Sciatic nerve (tissue), 2 donors: ENCODE measurements at regions of chr17 and their contacts with region 1.

Region 1: GRCh38 chr17:79789534-79790353 is 7.1 kb downstream of the CBX8 start:
- DNase-seq: no peak
- ATAC-seq: peak; percentile 50

Region 2: GRCh38 chr17:79839363-79840268 is 49.9 kb after region 1 on chr17 and contains the start of gene CBX4:
- intact Hi-C with region 1: loop called (anchors 5 kb)
- DNase-seq: peak; percentile 97
- ATAC-seq: peak; percentile 84
- total RNA-seq, gene CBX4: 16.8 TPM

Region 3: DNA sequence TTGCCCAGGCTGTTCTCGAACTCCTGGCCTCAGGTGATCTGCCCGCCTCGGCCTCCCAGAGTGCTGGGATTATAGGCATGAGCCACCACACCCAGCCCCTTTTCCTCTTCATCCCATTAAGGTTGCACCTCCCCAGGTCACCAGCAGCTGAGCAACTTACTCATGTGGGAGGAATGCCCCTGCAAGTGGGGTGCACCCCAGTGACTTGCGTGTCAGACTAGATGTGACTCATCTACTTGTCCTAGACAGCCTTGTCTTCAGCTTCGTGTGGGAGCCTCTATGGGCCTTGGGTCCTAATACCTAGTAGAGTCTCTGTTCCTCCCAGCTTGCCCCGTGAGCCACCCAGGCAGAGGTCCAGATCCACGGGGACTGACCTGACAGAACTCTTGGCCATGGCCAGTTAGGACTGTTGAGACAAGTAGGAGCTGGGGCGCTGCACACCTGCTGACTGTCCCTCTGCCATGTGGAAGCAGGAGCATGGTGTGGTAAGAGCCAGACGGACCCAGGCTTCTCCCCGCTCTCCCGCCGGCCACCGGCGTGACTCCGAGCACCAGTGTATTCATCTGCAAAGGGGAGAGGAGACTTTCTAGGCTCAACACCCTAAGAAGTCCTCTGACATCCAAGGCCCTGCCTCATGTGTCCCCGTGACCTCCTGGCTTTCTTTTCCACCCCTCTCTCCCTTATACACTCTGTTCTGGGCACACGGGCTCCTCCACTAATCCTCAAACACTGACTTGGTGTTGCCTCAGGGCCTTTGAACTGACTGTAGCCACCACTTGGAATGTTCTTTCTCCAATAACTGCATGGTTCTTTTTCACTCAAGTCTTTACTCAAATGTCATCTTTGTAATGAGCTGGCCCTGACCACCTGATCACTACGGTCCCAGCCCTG is 61.1 kb after region 1 on chr17:
- intact Hi-C with region 1: no loop called
- DNase-seq: no peak
- ATAC-seq: no peak

Region 4: DNA sequence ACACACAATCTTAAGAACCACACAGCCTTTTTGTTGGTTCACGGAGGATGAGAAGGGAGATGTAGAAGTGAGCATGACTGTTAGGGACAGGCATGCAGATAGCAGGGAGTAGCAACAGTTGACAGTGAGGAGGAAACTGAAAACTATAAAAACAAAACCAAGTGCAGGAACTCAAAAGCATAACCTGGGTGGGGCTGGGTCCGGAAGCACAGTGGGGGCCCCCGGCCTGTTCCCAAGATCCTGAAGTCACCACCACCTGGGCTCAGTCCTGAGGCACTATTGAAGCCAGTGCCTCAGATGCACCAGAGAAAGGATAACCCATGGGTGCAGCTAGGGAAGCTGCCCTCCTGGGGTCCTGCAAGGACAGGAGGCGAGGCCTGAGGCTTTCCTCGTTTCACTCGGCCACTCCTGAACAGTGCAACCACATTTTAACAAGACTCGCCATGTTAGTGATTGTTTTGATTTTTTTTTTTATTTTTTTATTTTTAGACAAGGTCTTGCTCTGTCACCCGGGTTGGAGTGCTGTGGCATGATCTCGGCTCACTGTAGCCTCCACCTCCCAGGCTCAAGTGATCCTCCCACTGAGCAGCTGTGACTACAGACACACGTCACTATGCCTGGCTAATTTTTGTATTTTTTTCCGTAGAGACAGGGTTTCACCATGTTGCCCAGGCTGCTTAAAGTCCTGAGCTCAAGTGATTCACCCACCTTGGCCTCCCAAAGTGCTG is 77.2 kb after region 1 on chr17:
- intact Hi-C with region 1: no loop called
- DNase-seq: no peak
- ATAC-seq: no peak

Region 5: DNA sequence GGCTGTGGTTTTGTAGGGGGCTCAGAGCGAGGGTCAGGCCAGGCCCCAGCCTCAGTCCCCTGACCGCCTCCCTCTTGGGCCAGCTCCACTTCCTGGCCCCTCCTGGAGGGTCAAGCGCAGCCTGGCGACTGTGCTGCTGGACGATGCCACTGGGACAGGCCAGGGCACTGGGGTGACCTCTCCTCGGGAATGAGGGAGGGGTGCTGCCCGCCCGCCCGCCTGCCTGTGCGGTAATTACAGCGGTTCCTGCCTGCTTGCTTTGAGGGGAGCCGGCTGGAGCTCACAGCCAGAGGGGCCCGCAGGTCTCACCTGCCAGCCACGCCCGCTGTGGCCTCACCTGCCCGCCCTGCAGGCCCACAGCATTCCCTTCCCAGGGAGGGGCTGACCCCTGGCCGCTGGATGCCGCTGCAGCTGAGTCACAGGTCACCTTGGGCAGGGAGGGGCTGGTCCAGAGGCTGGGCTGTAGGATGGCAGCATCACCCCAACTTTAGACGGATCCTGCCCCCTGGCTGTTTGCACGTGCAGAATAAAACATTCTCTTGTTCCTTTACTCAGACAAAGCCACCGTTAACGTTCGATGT is 126.2 kb after region 1 on chr17:
- intact Hi-C with region 1: loop called (anchors 10 kb)
- DNase-seq: peak; percentile 51
- ATAC-seq: peak; percentile 44